ENCODE measurements at regions of chr3 and their contacts with region 1.

Region 1: GRCh38 chr3:73848173-73848906 is 223.6 kb upstream of the PDZRN3 start:
- DNase-seq: no peak
- H3K4me3 ChIP-seq: no peak overlapping the region
- CTCF ChIP-seq: no peak
- POLR2A ChIP-seq: no peak

Region 2: DNA sequence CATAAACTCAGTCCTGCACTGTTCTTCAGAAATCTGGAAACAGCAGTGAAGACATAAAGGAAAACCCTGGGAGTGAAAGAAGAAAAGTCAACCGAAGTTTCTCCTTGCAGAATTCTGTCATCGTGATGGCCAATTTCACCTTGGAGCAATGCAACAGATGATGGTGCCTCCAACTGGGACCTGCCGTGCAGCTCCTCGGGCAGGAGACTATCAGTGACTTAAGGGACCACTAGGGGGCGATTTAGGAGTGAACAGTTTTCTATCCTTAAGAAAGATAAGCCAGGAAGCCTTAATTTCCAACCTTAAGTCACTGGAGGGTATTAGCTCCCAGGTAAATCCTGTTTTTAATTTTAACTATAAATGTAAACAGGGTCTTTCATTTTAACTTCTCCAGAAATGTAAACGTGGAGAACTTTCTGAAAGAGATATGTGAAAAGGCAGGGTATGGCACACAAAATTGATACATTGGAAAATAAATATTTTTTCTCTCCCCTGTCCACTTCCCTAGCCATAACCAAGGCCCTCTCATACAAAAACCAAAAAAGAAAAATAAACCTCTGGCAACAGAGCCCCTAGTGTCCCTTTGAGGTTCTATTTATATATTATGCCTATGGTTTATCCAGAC is 339.9 kb before region 1 on chr3:
- intact Hi-C with region 1: loop called (anchors 5 kb)
- DNase-seq: peak; percentile 54 to 83
- H3K4me3 ChIP-seq: no peak overlapping the region
- CTCF ChIP-seq: peak in 1 of 3 donors; percentile 59
- POLR2A ChIP-seq: no peak

Region 3: DNA sequence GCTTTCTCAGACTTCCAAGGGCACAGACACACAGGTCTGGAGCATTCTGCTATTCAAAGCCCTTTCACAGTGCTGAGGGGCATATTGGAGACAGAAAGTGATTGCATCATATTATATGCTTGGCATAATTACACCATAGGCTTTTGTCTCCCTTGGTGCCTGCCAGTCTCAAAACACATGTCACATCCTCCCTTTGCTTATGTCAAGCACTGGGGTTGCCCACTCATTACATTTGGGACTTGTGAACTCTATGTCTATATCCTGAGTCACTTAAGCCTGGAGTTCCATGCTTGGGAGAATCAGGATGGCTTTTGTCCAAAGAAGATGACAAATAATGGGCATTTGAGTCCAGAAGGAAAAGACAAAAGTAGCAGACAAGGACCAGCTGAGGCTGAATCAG is 211.3 kb before region 1 on chr3:
- intact Hi-C with region 1: no loop called
- DNase-seq: no peak
- H3K4me3 ChIP-seq: no peak overlapping the region
- CTCF ChIP-seq: no peak
- POLR2A ChIP-seq: no peak

Measured in lower leg skin (tissue), 4 donors.